PC-9 (cell line): ENCODE measurements at regions of chr5 and their contacts with region 1.

Region 1: DNA sequence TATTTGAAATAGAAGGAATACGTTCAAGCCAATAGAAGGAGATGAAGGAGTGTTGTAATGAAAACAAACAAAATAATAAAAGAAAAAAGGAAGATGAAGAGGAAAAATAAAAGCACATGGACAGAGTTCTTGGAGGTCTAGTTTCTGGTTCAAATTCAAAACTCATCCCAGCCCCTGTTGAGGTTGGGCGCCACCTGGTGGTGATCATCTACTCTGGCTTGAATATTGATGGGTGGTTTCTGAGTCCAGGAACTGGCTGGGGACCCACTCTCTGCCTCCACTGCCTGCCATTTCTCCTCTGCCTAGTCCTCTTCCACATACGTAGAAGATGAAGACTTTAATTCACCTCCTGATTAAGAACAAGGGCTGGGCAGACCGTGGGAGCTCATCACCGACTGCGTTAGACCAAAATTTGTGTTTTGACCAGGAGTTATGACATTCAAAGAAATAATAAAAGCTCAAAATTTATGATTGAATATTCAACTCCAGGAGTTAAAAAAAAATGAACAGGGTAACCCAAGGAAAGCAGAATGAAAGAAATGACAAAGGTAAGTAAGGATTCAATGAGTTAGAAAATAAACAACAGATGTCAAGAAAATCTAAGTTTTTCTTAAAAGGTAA is 99.0 kb upstream of the SLC1A3 start:
- DNase-seq: peak; percentile 52 to 74
- H3K4me3 ChIP-seq: no peak overlapping the region
- H3K27ac ChIP-seq: no peak overlapping the region
- H3K4me1 ChIP-seq: peaks cover 14% of the 10 kb centered on the region
- H3K27me3 ChIP-seq: no peaks in the 10 kb centered on the region
- CTCF ChIP-seq: peak; percentile 98

Region 2: GRCh38 chr5:36690041-36690961 is 182.9 kb after region 1 on chr5:
- CTCF ChIA-PET with region 1: no interaction called
- POLR2A ChIA-PET with region 1: no interaction called
- intact Hi-C with region 1: loop called (anchors 10 kb)
- DNase-seq: peak; percentile 25 to 56
- H3K4me3 ChIP-seq: no peak overlapping the region
- H3K27ac ChIP-seq: no peak overlapping the region
- H3K4me1 ChIP-seq: peaks cover 5% of the 10 kb centered on the region; the same call in 1 of the 2 replicates
- H3K27me3 ChIP-seq: no peaks in the 10 kb centered on the region
- CTCF ChIP-seq: no peak